Activated CD8-positive, alpha-beta memory T cell treated with anti-CD3 and anti-CD28 coated beads, Interleukin-2, amount 10 ng/mL, durations not matched to agents 7 days and 5 days (primary cell): ENCODE measurements at regions of chr12 and their contacts with region 1.

Region 1: DNA sequence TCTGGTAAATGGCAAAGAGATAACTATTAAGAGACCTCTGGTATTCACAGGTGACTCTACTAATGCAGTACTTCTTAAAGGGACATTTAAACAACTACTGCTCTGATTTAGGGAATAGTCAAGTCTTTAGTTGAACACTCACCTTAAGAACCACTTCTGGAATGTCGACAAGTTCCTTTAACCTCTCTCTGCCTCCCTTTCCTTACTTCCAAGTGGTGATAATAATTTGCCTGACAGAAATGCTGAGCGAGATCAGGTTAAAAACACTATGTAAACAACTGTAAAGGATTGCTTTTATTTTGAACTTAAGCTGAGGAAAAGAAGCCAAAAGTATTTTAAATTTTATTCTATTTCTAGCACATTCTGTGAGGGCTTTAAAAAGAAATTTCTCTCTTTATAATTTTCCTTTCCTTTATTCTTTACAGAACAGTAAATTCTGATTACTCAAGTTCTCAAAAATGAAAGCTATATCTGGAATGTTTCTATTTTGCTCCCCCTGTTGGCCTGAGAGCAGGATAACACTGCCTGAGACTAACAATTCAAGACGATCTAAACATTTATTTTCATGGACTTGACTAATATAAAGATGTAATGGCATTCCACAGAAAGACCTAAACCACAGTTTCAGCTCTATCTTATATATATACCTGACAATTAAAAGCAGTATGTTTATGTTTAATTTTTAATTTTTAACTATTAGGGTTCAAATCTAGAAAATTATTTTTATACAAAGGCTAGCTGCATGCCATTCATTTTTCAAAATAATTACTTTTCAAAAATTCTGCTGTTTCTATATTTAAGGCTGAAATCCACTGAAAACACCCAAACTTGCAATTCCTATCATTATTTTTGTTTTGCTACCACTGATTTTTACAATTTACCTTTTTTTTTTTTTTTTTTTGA is 29.2 kb downstream of the ZCCHC8 start:
- DNase-seq: no peak
- ATAC-seq: peak; percentile 78
- H3K4me3 Mint-ChIP-seq: no peak overlapping the region
- H3K27ac Mint-ChIP-seq: peak overlapping the region; percentile 59
- H3K4me1 Mint-ChIP-seq: peaks cover 27% of the 10 kb centered on the region
- H3K27me3 Mint-ChIP-seq: no peaks in the 10 kb centered on the region

Region 2: DNA sequence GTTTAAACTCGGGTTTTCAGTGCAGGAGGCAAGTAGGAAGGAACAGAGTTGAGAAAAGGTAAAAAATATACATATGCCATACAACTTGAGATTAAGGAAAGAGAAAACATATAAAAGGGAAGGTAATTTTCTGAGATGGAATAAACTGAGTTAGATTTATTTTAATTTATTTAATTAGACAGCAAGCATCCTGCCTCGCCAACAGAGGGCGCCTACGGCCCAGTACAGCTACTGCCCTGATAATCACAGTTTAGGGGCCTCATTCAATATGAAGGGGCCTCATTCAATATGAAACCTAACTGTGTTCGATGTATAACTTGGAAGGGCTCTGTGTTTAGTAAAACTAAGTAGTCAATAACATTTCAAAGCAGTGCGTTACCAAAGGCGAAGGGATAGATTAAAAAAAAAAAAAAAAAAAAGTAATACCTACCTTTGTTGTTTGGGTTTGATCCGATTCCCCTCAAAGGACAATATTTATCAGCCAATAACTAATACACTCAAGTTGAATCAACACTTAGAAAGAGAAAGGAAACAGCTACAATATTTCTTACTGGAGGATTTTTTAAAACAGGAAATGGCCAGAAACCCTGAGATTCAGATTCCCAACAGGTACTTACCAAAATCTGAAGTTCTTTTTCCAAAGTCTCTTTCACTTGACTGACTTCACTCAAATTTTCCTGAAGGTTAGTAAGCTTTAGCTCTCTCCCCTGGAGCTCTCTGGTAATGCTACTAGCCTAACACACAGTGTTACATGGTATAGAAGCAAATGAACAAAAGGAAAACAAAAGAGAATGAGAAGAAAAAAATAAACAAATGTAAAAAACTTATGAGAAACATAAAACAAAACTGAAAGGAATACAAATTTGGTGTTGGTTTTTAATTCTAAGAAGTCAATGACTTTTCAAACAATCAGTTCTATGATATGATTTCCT is 135.3 kb before region 1 on chr12:
- CTCF ChIA-PET with region 1: interaction called, 13 read pairs
- DNase-seq: peak; percentile 71
- ATAC-seq: peak; percentile 73
- H3K4me3 Mint-ChIP-seq: peak overlapping the region; percentile 2
- H3K27ac Mint-ChIP-seq: peak overlapping the region; percentile 79
- H3K4me1 Mint-ChIP-seq: peaks cover 14% of the 10 kb centered on the region
- H3K27me3 Mint-ChIP-seq: no peaks in the 10 kb centered on the region

Region 3: DNA sequence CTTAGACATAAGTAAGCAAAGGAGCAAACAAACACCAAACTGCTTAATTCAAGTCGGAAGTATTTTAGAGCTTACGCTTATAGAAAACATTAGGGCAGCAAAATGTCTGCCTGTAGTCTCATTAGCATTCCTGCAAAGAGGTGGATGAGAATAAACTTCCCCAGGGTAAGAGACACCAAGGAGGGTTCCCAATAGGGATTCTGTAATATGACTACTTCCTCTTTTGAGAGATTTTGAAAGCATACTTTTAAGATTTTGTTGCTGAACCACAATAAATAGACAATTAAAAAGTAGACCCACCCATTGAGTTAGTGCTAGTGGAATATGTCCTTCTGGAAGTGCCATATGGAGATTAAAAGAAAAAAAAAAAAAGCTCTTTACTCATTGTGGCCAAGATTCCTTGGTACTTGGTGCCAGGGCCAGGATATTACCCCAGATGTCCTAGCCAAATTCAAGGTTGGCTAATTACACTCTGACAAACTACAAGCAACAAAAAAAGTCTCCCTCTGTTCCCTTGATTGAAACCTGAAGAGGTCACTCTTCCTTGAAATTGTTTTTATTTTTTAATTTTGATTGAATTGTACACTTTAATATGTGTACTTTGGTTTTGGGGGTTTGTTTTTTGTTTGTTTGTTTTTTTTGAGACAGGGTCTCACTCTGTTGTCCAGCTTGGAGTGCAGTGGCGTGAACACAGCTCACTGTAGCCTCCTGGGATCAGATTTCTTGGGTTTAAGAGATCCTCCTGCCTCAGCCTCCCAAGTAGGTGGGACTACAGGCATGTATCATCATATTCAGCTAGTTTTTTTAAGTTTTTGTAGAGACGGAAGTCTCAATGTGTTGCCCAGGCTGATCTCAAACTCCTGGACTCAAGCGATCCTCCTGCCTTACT is 57.8 kb before region 1 on chr12:
- CTCF ChIA-PET with region 1: interaction called, 30 read pairs
- DNase-seq: no peak
- ATAC-seq: no peak
- H3K4me3 Mint-ChIP-seq: no peak overlapping the region
- H3K27ac Mint-ChIP-seq: peak overlapping the region; percentile 94
- H3K4me1 Mint-ChIP-seq: peaks cover 34% of the 10 kb centered on the region
- H3K27me3 Mint-ChIP-seq: no peaks in the 10 kb centered on the region

Region 4: GRCh38 chr12:122449353-122449752 is 22.2 kb before region 1 on chr12:
- CTCF ChIA-PET with region 1: interaction called, 18 read pairs
- DNase-seq: no peak
- ATAC-seq: no peak
- H3K4me3 Mint-ChIP-seq: no peak overlapping the region
- H3K27ac Mint-ChIP-seq: no peak overlapping the region
- H3K4me1 Mint-ChIP-seq: peaks cover 23% of the 10 kb centered on the region
- H3K27me3 Mint-ChIP-seq: no peaks in the 10 kb centered on the region

Region 5: GRCh38 chr12:122486805-122487426 is 15.3 kb after region 1 on chr12:
- CTCF ChIA-PET with region 1: interaction called, 14 read pairs
- DNase-seq: no peak
- ATAC-seq: no peak
- H3K4me3 Mint-ChIP-seq: no peak overlapping the region
- H3K27ac Mint-ChIP-seq: no peak overlapping the region
- H3K4me1 Mint-ChIP-seq: peaks cover 17% of the 10 kb centered on the region
- H3K27me3 Mint-ChIP-seq: no peaks in the 10 kb centered on the region